ENCODE measurements at regions of chr2 and their contacts with region 1.

Region 1: GRCh38 chr2:64932371-64933216 is 56.6 kb upstream of the SLC1A4 start:
- DNase-seq: no peak
- ATAC-seq: no peak
- H3K4me3 ChIP-seq: no peak overlapping the region
- H3K27ac ChIP-seq: peak overlapping the region in 1 of 12 donors; percentile 68
- H3K4me1 ChIP-seq: peaks cover 0 to 11% (median 0%) of the 10 kb centered on the region in 12 donors
- H3K27me3 ChIP-seq: no peaks in the 10 kb centered on the region
- CTCF ChIP-seq: no peak
- POLR2A ChIP-seq: no peak

Region 2: DNA sequence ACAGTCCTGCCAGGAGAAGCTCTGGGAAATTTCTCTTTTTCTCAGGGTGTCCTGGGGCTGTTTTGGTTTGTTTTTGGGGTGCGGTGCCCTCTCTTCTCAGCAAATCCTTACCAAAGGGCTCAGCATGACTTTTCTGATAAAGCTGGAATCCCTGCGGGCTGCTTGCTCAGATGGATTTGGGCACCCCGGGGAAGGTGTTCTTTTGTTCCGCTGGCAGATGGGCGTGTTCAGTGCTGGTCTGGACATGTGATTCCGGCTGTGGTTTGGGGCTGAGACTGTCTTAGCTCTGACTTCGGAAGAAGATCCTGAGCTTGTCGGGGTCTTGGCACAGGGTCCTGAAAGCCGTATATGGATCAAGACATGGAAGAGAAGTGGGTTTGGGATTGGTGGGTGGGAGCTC is 634.0 kb after region 1 on chr2:
- intact Hi-C with region 1: loop called in 1 of 10 experiments (anchors 10 kb)
- DNase-seq: no peak
- ATAC-seq: no peak
- H3K4me3 ChIP-seq: peak overlapping the region in 2 of 12 donors; percentile 9 to 24
- H3K27ac ChIP-seq: no peak overlapping the region
- H3K4me1 ChIP-seq: no peaks in the 10 kb centered on the region
- H3K27me3 ChIP-seq: no peaks in the 10 kb centered on the region
- CTCF ChIP-seq: no peak
- POLR2A ChIP-seq: no peak